ENCODE measurements at regions of chr17 and their contacts with region 1.

Region 1: DNA sequence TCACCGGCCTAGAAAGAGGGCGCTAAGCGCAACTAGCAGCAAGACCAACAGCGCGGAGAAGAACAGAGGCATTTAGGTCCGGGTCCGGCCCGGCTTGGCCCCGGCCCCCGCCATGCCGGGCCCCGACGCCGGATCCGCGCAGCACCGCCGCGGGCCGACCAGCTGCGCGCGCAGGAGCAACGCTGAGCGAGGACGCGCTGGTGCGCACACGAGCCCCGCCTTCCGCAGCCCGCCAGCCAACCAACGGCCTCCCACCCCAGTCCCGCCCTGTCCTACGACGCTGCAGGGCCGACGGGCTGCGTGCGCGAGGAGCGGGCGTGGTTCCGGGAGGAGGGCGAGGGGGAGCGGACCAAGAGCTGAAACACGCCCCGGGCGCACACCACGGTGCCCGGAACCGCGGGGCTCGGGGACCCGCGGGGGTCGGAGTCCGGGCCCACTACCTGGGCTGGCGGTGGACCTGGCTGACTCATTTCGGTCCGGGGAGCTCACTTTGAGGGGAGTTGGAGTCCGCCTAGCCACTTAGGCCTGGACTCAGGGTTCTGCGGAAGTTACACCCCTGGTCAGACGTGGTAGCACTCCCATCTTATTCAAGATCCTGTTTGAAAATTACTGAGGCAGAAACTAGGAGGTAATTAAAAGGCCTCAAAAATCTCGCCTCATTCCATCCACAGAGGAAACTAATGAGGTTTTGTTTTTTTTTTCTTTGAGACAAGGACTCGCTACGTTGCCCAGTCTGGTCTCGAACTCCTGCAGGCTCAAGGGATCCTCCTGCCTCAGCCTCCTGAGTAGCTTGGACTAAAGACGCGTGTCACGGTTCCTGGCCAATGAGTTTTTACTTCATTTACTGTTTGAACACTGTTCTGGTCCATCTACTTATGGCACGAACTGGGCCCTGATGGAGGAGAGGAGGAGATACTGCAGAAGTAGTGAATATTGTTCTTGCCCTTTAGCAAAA is at the start of gene BLTP2:
- DNase-seq: peak; percentile 92
- H3K4me3 Mint-ChIP-seq: peak within 1 kb of the TSS; percentile 94
- H3K27ac Mint-ChIP-seq: peak within 1 kb of the TSS; percentile 83
- H3K4me1 Mint-ChIP-seq: peaks cover 27% of the 10 kb centered on the region
- H3K27me3 Mint-ChIP-seq: no peaks in the 10 kb centered on the region
- CTCF ChIP-seq: no peak
- total RNA-seq, gene BLTP2: 119 and 126 TPM in 2 replicates

Region 2: GRCh38 chr17:28528329-28529014 is 116.8 kb before region 1 on chr17:
- CTCF ChIA-PET with region 1: no interaction called
- POLR2A ChIA-PET with region 1: no interaction called
- intact Hi-C with region 1: no loop called
- DNase-seq: peak; percentile 35
- H3K4me3 Mint-ChIP-seq: no peak overlapping the region
- H3K27ac Mint-ChIP-seq: no peak overlapping the region
- H3K4me1 Mint-ChIP-seq: peaks cover 43% of the 10 kb centered on the region
- H3K27me3 Mint-ChIP-seq: no peaks in the 10 kb centered on the region
- CTCF ChIP-seq: no peak

Region 3: DNA sequence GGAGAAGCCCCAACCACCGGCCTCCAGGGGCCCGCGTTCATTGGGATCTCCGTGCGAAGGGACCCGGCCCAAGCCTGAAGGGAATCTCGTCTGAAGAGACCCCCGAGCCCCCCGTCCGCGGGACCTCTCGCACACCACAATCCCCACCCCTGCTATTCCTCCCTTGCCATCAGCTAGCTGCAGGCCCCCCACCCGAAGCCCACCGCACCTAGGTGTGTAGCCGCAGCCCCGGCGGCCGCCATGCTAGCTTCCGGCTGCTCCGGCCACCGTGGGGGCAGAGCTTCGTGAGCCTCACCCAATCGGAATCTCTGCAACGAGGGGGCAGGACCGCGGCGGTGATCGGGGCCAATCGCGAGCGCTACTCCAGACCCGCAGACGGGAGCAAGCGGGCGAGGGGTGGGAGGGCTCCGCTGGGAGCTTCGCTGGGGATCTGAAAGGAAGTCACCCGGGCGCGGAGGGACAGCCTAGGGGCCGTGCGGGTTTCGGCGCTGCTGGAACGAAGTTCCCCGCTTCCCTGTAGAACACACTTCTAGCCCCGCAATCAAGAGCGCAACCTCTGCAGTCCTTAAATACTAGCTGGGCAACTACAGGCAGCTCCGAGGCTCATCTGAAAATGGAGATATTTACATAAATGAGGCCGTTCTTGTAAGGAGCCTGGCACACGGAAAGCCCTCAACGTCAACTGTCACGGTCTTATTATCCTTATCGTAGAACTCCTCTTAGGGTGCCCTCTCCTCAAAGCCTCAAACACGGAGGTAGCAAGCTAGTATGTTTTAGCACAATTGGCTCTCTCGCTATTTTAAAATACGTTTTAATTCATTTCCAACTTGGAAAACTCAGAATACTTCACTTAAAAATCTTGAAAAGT is 73.8 kb before region 1 on chr17 and contains the start of gene PIGS:
- CTCF ChIA-PET with region 1: no interaction called
- POLR2A ChIA-PET with region 1: interaction called, 15 read pairs
- intact Hi-C with region 1: no loop called
- DNase-seq: peak; percentile 91
- H3K4me3 Mint-ChIP-seq: peak within 1 kb of the TSS; percentile 93
- H3K27ac Mint-ChIP-seq: peak within 1 kb of the TSS; percentile 85
- H3K4me1 Mint-ChIP-seq: peaks cover 24% of the 10 kb centered on the region
- H3K27me3 Mint-ChIP-seq: no peaks in the 10 kb centered on the region
- CTCF ChIP-seq: no peak
- total RNA-seq, gene PIGS: 50.5 and 56.1 TPM in 2 replicates

Region 4: GRCh38 chr17:28585851-28586250 is 59.4 kb before region 1 on chr17:
- CTCF ChIA-PET with region 1: no interaction called
- POLR2A ChIA-PET with region 1: no interaction called
- intact Hi-C with region 1: no loop called
- DNase-seq: no peak
- H3K4me3 Mint-ChIP-seq: no peak overlapping the region
- H3K27ac Mint-ChIP-seq: no peak overlapping the region
- H3K4me1 Mint-ChIP-seq: no peaks in the 10 kb centered on the region
- H3K27me3 Mint-ChIP-seq: no peaks in the 10 kb centered on the region
- CTCF ChIP-seq: no peak

Region 5: GRCh38 chr17:28598799-28599310 is 46.4 kb before region 1 on chr17 and contains the start of gene SPAG5:
- CTCF ChIA-PET with region 1: no interaction called
- POLR2A ChIA-PET with region 1: interaction called, 13 read pairs
- intact Hi-C with region 1: no loop called
- DNase-seq: peak; percentile 92
- H3K4me3 Mint-ChIP-seq: peak within 1 kb of the TSS; percentile 87
- H3K27ac Mint-ChIP-seq: peak within 1 kb of the TSS; percentile 90
- H3K4me1 Mint-ChIP-seq: peaks cover 21% of the 10 kb centered on the region
- H3K27me3 Mint-ChIP-seq: no peaks in the 10 kb centered on the region
- CTCF ChIP-seq: no peak
- total RNA-seq, gene SPAG5: 31.5 and 38.1 TPM in 2 replicates

Region 6: DNA sequence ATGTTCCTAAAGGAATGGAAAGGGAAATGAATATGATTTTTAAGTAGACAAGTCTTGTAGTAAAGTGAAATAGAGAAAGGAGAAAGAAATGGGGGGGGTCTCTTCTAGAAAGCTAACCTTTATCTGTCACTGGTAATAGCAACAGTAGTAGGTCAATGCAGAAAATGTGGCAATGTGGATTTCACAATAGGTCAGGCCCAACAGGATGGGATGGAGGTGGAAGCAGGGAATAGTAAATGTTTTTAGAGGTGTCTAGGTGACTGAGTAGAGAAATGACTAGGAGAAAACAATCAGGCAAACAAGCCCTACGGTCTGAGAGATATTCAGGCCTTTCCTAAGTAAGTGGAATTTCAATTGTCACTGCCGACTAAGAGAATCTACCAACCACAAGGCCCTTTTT is 25.3 kb before region 1 on chr17:
- CTCF ChIA-PET with region 1: interaction called, 8 read pairs
- POLR2A ChIA-PET with region 1: interaction called, 12 read pairs
- intact Hi-C with region 1: no loop called
- DNase-seq: no peak
- H3K4me3 Mint-ChIP-seq: no peak overlapping the region
- H3K27ac Mint-ChIP-seq: no peak overlapping the region
- H3K4me1 Mint-ChIP-seq: no peaks in the 10 kb centered on the region
- H3K27me3 Mint-ChIP-seq: no peaks in the 10 kb centered on the region
- CTCF ChIP-seq: no peak

Region 7: DNA sequence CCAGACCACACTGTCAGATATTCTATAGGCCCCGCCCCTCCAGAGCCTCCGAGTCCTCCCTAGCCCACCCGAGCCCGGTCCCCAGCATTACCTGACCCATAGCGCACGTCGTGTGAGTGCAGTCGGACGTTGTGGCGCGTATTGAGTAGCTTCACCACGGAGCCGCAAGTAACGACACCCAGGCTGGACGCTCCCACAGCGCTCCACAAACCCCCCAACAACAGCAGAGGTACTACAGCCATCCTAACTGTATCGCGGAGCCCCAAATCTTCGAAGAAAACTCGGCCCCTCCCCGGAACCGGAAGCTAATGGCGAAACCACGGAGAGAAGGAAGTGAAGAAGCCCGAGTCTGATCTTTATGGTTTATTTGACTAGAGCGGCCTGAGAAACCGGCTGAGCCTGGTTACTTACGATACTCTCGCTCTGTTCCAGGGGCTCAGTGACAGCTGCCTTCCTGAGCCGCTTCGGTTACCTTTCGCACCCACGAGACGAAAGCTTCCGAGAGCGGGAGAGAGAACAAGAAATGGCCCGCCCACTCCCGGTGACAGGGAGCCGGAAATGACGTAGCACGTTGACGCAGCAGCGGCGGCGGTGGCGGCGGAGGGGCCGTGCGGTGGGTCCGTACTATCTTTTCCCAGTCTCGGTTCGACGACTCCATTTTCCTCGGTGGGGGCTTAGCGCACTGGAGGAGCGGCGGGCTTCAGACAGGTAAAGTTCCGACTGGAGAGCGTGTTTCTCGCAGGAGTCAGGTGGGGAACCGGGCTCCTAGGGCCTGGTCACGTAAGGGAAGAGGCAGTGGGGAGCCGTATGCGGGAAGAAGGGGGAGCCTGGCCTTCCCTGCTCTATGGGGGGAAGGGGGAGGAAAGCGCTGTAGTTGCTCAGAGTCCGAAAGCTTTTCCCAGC is 16.6 kb after region 1 on chr17 and contains the starts of genes SDF2 and SUPT6H:
- CTCF ChIA-PET with region 1: interaction called, 25 read pairs
- POLR2A ChIA-PET with region 1: interaction called, 208 read pairs
- intact Hi-C with region 1: no loop called
- DNase-seq: peak; percentile 86
- H3K4me3 Mint-ChIP-seq: peak within 1 kb of the TSS; percentile 88
- H3K27ac Mint-ChIP-seq: peak within 1 kb of the TSS; percentile 96
- H3K4me1 Mint-ChIP-seq: peaks cover 46% of the 10 kb centered on the region
- H3K27me3 Mint-ChIP-seq: no peaks in the 10 kb centered on the region
- CTCF ChIP-seq: no peak
- total RNA-seq, gene SDF2: 31.4 and 31.8 TPM in 2 replicates
- total RNA-seq, gene SUPT6H: 81.7 and 86.4 TPM in 2 replicates

Region 8: DNA sequence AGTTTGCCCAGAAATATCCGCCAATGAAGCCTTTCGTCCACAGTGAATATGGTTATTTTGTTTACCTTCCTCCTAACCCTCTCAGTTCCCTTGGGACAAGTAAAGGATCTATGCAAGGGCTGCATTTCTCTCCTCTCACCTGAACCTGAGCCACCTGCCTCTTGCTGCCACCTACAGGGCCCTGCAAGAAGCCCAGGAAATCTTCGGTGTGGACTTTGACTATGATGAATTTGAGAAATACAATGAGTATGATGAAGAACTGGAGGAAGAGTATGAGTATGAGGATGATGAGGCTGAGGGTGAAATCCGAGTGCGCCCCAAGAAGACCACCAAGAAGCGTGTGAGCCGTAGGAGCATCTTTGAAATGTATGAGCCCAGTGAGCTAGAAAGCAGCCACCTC is 30.7 kb after region 1 on chr17:
- CTCF ChIA-PET with region 1: interaction called, 13 read pairs
- POLR2A ChIA-PET with region 1: no interaction called
- intact Hi-C with region 1: loop called (anchors 1 kb)
- DNase-seq: peak; percentile 43
- H3K4me3 Mint-ChIP-seq: no peak overlapping the region
- H3K27ac Mint-ChIP-seq: no peak overlapping the region
- H3K4me1 Mint-ChIP-seq: no peaks in the 10 kb centered on the region
- H3K27me3 Mint-ChIP-seq: no peaks in the 10 kb centered on the region
- CTCF ChIP-seq: no peak

Region 9: DNA sequence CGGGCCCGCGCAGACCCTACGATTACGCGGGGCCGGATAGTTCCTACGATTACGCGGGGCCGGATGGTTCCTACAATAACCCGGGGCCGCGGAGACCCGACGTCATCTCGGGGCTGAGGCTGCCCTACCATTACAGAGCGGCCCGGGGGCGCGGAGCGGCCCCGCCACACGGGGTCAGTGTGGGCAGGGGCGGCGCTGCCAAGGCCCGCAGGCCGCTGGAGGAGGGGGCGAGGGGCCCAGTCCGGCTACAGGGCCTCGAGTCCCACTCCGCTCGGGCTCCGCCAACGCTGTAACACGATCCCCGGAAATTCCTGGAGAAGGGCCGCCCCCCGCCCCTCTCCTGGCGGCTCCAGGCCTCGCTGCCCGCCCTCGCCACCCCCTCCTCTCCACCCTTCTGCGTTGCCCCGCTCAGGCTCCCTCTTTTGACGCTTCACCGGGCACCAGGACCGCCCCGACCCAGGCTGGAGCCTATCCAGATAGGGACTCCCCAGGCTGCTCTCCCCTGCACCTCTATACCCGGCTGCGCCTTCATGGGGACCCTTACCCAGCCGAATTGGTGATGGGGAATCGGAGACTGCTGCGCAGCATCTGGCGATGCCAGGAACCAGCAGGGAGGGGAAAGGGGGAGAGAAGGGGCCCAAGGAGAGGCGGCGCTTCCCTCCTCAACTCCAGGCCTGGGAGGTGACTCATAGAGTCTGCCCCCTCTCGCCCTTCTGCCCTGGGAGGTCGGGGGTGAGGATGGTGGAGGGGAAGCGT is 72.5 kb after region 1 on chr17 and contains the start of gene RAB34:
- CTCF ChIA-PET with region 1: interaction called, 8 read pairs
- POLR2A ChIA-PET with region 1: interaction called, 77 read pairs
- intact Hi-C with region 1: loop called (anchors 2 kb)
- DNase-seq: peak; percentile 90
- H3K4me3 Mint-ChIP-seq: peak within 1 kb of the TSS; percentile 91
- H3K27ac Mint-ChIP-seq: peak within 1 kb of the TSS; percentile 97
- H3K4me1 Mint-ChIP-seq: peaks cover 31% of the 10 kb centered on the region
- H3K27me3 Mint-ChIP-seq: no peaks in the 10 kb centered on the region
- CTCF ChIP-seq: peak; percentile 26
- total RNA-seq, gene RAB34: 90.0 and 105 TPM in 2 replicates